SK-N-SH (cell line): ENCODE measurements at regions of chr1 and their contacts with region 1.

Region 1: DNA sequence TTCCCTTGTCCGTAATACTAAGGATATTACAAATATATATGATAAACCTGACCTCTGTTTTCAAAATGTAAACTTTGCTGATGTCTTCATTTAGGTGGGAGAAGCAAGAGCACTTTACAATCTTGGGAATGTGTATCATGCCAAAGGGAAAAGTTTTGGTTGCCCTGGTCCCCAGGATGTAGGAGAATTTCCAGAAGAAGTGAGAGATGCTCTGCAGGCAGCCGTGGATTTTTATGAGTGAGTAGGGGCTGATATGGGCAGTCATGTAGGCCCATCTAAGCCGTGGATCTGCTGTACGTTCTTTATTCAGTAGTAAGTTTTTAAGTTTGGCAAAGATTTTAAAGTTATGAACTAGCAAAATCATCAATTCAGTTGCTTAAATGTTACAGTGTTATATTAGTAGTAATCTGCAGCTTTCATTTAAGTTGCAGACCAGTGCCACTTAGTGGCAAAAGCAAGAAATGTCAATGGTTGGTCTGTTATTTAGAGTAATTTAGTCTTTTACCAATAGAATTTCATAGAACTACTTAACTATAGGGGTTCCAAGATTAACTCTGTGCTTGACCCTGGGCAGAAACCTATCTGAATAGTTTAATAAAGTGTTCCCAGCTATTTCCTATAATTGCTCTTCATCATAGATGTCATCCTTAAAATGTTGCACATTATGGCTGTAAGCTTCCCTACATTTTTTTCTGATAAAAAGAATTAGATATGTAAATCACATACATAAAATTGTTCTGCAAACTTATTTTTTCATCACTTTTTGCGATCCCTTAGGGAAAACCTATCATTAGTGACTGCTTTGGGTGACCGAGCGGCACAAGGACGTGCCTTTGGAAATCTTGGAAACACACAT is 21.3 kb downstream of the GPSM2 start:
- DNase-seq: peak; percentile 44
- H3K4me3 ChIP-seq: peak overlapping the region in 1 of 2 experiments; percentile 5; a peak in 1 of 4 replicates
- H3K27ac ChIP-seq: peak overlapping the region in 1 of 2 experiments; percentile 20; a peak in 1 of 4 replicates
- H3K4me1 ChIP-seq: peaks cover 0 to 2% of the 10 kb centered on the region in 2 experiments; a peak in 3 of 4 replicates
- H3K27me3 ChIP-seq: no peaks in the 10 kb centered on the region
- CTCF ChIP-seq: peak; percentile 83
- EP300 ChIP-seq: no peak
- RAD21 ChIP-seq: peak; percentile 91

Region 2: GRCh38 chr1:108512239-108512981 is 385.7 kb before region 1 on chr1:
- CTCF ChIA-PET with region 1: interaction called, 19 read pairs
- POLR2A ChIA-PET with region 1: no interaction called
- DNase-seq: peak; percentile 41
- H3K4me3 ChIP-seq: peak overlapping the region in 1 of 2 experiments; percentile 37; a peak in 1 of 4 replicates
- H3K27ac ChIP-seq: no peak overlapping the region
- H3K4me1 ChIP-seq: no peaks in the 10 kb centered on the region; a peak in 1 of 4 replicates
- H3K27me3 ChIP-seq: no peaks in the 10 kb centered on the region
- CTCF ChIP-seq: peak; percentile 96
- EP300 ChIP-seq: no peak
- RAD21 ChIP-seq: peak; percentile 96

Region 3: DNA sequence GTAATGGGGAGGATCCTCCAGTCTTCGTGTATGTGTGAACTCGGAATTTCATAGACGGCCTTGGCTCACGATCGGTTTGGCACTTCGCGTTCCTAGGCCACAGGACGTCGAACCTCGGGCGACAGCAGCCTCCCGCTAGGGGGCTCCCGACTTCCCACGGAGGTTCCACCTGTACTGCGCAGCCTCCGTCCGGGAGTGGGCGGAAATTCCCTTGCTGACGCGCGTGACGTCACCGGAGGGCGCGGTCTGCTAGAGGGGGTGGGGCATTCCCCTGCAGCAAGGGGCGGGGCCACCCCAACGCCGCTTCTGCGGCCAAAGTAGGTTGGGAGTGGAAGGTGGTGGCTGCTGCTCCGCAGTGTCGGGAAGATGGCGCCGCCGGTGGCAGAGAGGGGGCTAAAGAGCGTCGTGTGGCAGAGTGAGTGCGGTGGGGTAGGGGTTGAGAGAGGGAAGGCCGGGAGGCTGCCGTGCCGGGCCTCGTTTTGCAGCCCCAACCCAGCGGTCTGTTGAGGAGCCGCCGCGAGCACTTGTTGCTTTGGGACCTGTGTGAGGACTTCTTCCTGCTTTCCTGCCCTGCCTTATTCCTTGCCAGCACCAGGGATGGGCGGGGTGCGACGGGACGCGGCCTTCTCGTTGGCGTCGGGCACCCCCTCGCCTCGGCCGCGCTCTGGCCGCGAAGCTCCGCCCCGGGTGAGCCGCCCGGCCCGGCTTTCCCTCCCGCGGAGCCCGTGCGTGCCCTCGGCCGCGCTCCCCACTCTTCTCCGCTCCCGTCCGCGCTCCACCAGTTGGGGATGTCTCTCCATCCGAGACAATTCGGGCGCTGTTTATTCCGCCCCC is 151.5 kb before region 1 on chr1 and contains the start of gene STXBP3:
- CTCF ChIA-PET with region 1: interaction called, 23 read pairs
- POLR2A ChIA-PET with region 1: no interaction called
- DNase-seq: peak; percentile 97
- H3K4me3 ChIP-seq: peak within 1 kb of the TSS; percentile 88 to 97
- H3K27ac ChIP-seq: peak within 1 kb of the TSS; percentile 90 to 97
- H3K4me1 ChIP-seq: peaks cover 4 to 5% of the 10 kb centered on the region in 2 experiments; a peak in 3 of 4 replicates
- H3K27me3 ChIP-seq: no peaks in the 10 kb centered on the region
- CTCF ChIP-seq: peak; percentile 96
- EP300 ChIP-seq: peak in 1 of 2 experiments; percentile 11; a peak in 2 of 4 replicates
- RAD21 ChIP-seq: peak; percentile 55
- polyA plus RNA-seq, gene STXBP3: 12.6 and 16.8 TPM in 2 replicates

Region 4: GRCh38 chr1:108828022-108828961 is 69.8 kb before region 1 on chr1:
- CTCF ChIA-PET with region 1: interaction called, 104 read pairs
- POLR2A ChIA-PET with region 1: interaction called, 5 read pairs
- DNase-seq: peak; percentile 56
- H3K4me3 ChIP-seq: no peak overlapping the region; a peak in 1 of 4 replicates
- H3K27ac ChIP-seq: peak overlapping the region in 1 of 2 experiments; percentile 93; a peak in 2 of 4 replicates
- H3K4me1 ChIP-seq: peaks cover 9 to 20% of the 10 kb centered on the region in 2 experiments; a peak in 3 of 4 replicates
- H3K27me3 ChIP-seq: no peaks in the 10 kb centered on the region
- CTCF ChIP-seq: peak; percentile 61
- EP300 ChIP-seq: no peak
- RAD21 ChIP-seq: peak; percentile 64

Region 5: GRCh38 chr1:108913105-108913948 is 15.2 kb after region 1 on chr1:
- CTCF ChIA-PET with region 1: interaction called, 13 read pairs
- POLR2A ChIA-PET with region 1: no interaction called
- DNase-seq: peak; percentile 29
- H3K4me3 ChIP-seq: no peak overlapping the region
- H3K27ac ChIP-seq: peak overlapping the region in 1 of 2 experiments; percentile 60; a peak in 3 of 4 replicates
- H3K4me1 ChIP-seq: peaks cover 0 to 7% of the 10 kb centered on the region in 2 experiments; a peak in 2 of 4 replicates
- H3K27me3 ChIP-seq: no peaks in the 10 kb centered on the region
- CTCF ChIP-seq: no peak
- EP300 ChIP-seq: no peak
- RAD21 ChIP-seq: no peak

Region 6: GRCh38 chr1:108972951-108973350 is 74.9 kb after region 1 on chr1:
- CTCF ChIA-PET with region 1: no interaction called
- POLR2A ChIA-PET with region 1: no interaction called
- DNase-seq: no peak
- H3K4me3 ChIP-seq: no peak overlapping the region
- H3K27ac ChIP-seq: no peak overlapping the region
- H3K4me1 ChIP-seq: no peaks in the 10 kb centered on the region
- H3K27me3 ChIP-seq: no peaks in the 10 kb centered on the region
- CTCF ChIP-seq: no peak
- EP300 ChIP-seq: no peak
- RAD21 ChIP-seq: no peak

Region 7: GRCh38 chr1:109075531-109076490 is 177.7 kb after region 1 on chr1 and contains the start of gene TAF13:
- CTCF ChIA-PET with region 1: no interaction called
- POLR2A ChIA-PET with region 1: no interaction called
- DNase-seq: peak; percentile 96
- H3K4me3 ChIP-seq: peak within 1 kb of the TSS; percentile 81 to 83
- H3K27ac ChIP-seq: peak within 1 kb of the TSS; percentile 95 to 97
- H3K4me1 ChIP-seq: no peaks in the 10 kb centered on the region; a peak in 2 of 4 replicates
- H3K27me3 ChIP-seq: no peaks in the 10 kb centered on the region
- CTCF ChIP-seq: peak; percentile 22
- EP300 ChIP-seq: peak in 1 of 2 experiments; percentile 19; a peak in 1 of 4 replicates
- RAD21 ChIP-seq: no peak
- polyA plus RNA-seq, gene TAF13: 16.0 and 21.9 TPM in 2 replicates